ENCODE measurements at regions of chr7 and their contacts with region 1.

Region 1: GRCh38 chr7:120819863-120820262 is 38.1 kb downstream of the TSPAN12 start:
- DNase-seq: no peak
- H3K4me3 ChIP-seq: no peak overlapping the region
- H3K4me1 ChIP-seq: peaks cover 5% of the 10 kb centered on the region
- H3K27me3 ChIP-seq: no peaks in the 10 kb centered on the region

Region 2: DNA sequence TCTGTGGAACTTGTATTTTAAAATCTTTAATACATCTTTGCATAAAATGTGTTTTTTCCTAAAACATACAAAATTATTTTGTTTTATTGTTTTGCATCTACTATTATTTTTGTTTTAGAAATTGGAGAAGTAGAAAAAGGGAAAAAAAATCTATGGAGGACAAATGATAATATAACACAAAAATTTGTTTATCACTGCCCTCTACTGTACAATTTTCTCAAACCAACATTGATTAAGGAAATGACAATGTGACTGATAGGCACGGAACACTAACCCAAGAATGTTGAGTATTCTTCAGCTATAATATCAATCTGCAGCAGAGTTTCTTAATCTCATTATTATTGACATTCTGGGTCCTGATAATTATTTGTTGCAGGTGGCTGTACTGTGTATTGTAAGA is 121.2 kb after region 1 on chr7:
- in situ Hi-C with region 1: loop called (anchors 10 kb)
- DNase-seq: peak in 1 of 2 experiments; percentile 44
- H3K4me3 ChIP-seq: no peak overlapping the region
- H3K4me1 ChIP-seq: no peaks in the 10 kb centered on the region
- H3K27me3 ChIP-seq: no peaks in the 10 kb centered on the region

Region 3: GRCh38 chr7:121049028-121049791 is 229.3 kb after region 1 on chr7:
- in situ Hi-C with region 1: no loop called
- DNase-seq: no peak
- H3K4me3 ChIP-seq: no peak overlapping the region
- H3K4me1 ChIP-seq: no peaks in the 10 kb centered on the region
- H3K27me3 ChIP-seq: no peaks in the 10 kb centered on the region

Measured in HAP-1 (cell line).